Activated T-helper 2 cell treated with anti-CD3 and anti-CD28 coated beads, Interferon-gamma antibody, Interleukin-2, Interleukin-4, amounts not matched to agents 10 μg/mL and 5 μg/mL and 100 μg/mL, durations not matched to agents 14 hours and 24 hours and 36 hours (primary cell): ENCODE measurements at regions of chr19 and their contacts with region 1.

Region 1: GRCh38 chr19:17069218-17069617 is 6.0 kb downstream of the HAUS8 start:
- DNase-seq: no peak
- H3K4me3 Mint-ChIP-seq: no peak overlapping the region
- H3K27ac Mint-ChIP-seq: no peak overlapping the region
- H3K4me1 Mint-ChIP-seq: peaks cover 40% of the 10 kb centered on the region
- H3K27me3 Mint-ChIP-seq: no peaks in the 10 kb centered on the region

Region 2: DNA sequence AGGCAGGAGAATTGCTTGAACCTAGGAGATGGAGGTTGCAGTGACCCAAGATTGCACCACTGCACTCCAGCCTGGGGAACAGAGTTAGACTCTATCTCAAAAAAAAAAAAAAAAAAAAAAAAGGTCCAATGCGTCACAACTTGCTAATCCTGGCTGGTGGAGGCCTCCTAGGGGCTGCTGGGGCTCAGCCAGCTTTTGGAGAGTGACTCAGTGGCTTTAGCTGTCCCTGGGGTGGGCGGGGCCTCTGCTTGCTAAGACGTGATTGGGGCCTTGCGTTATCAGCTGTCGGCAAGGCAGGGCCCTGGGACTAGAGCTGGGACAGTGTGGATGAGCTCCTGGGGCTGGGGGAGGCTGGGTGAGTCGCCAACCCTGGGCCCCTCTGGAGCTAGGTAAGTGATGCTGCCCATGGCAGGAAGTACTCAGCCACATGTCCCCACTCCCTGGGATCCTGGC is 148.4 kb before region 1 on chr19:
- intact Hi-C with region 1: no loop called
- DNase-seq: no peak
- H3K4me3 Mint-ChIP-seq: no peak overlapping the region
- H3K27ac Mint-ChIP-seq: no peak overlapping the region
- H3K4me1 Mint-ChIP-seq: no peaks in the 10 kb centered on the region
- H3K27me3 Mint-ChIP-seq: no peaks in the 10 kb centered on the region

Region 3: DNA sequence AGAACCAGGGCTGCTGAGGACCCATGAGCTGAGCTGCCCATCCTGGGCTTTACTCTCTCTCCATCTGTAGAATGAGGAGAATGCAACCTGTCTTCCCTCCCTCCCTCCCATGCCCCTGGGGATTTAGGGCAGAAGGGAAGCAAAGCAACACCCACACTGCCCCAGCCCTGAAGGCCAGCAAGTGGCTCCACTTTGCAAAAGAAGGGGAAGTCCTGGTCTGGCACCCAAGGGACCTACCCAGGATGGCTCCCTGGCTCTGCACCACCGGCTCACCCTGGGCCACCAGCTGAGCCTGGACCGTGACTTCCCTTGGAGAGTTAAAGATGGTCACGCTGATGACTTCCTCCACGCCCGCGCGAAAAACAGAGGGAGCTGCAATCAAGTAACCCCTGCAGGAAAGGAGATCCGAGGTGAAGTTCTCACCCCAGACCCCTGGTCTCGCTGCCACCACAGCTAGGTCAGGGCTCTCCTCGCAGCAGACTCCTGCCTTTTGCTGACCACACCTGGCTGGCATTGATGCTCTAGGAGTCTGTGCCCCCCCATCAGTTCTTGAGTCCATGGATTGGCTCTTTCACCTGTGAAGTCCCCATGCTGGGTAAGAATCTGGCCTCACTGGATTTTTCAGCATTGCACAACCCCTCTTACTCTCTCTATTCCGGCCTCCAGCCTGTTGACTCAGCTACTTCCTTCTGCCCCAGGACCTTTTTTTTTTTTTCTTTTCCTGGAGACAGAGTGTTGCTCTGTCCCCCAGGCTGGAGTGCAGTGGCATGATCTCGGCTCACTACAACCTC is 47.2 kb before region 1 on chr19:
- intact Hi-C with region 1: no loop called
- DNase-seq: no peak
- H3K4me3 Mint-ChIP-seq: no peak overlapping the region
- H3K27ac Mint-ChIP-seq: no peak overlapping the region
- H3K4me1 Mint-ChIP-seq: peaks cover 3% of the 10 kb centered on the region
- H3K27me3 Mint-ChIP-seq: peaks cover 32% of the 10 kb centered on the region

Region 4: DNA sequence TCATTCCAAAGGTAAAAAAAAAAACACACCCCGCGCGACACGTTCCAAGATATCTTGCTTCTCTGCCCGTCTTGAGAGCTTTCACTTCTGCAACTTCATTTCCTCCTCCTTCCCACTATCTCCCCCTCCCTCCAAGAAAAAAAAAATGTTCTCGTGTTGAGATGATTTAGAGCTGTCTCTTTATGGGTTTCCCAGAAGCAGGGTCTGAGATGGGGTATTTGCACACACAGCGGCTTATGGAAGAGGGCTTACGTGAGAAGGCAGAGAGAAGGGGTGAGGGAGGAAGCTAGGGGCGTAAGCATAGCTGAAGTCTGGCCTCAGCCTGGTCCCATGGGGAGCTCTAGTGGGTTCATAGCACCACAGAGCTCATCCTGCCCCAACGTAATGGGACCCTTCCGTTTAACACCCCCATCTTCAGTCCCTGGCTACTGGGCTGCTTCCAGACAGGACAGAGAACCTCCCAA is 114.7 kb after region 1 on chr19:
- intact Hi-C with region 1: loop called (anchors 5 kb)
- DNase-seq: no peak
- H3K4me3 Mint-ChIP-seq: peak overlapping the region; percentile 77
- H3K27ac Mint-ChIP-seq: peak overlapping the region; percentile 91
- H3K4me1 Mint-ChIP-seq: peaks cover 16% of the 10 kb centered on the region
- H3K27me3 Mint-ChIP-seq: no peaks in the 10 kb centered on the region

Region 5: DNA sequence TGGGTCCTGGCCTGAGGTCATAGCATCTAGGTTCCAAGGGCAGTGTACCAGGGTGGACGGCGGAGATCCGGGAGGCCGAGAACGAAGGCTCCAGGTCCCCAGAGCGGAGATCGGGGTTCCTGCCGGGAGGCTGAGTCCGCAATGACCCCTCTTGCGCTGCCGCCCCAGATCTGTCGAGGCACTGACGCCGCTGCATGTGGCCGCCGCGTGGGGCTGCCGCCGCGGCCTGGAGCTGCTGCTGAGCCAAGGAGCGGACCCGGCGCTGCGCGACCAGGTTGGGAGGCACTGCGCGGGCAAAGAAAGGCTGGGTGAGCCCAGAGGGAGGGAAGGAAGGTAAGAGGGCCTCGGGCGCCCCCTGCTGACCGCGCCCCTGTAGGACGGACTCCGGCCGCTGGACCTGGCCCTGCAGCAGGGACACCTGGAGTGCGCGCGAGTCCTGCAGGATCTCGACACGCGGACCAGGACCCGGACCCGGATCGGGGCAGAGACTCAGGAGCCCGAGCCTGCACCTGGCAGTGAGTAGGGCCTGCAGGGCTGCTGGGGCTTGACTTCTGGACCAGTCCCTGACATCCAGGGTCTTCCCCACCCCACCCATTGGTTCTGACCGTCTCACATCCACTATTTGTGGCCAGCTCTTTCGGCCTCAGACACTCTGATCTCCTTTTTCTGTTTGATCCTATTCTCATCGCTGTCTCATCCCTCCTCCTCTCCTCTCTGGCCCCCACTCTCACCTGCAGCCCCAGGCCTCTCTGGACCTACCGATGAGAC is 213.5 kb after region 1 on chr19:
- intact Hi-C with region 1: loop called (anchors 1 kb)
- DNase-seq: peak; percentile 78
- H3K4me3 Mint-ChIP-seq: peak overlapping the region; percentile 89
- H3K27ac Mint-ChIP-seq: peak overlapping the region; percentile 85
- H3K4me1 Mint-ChIP-seq: peaks cover 5% of the 10 kb centered on the region
- H3K27me3 Mint-ChIP-seq: no peaks in the 10 kb centered on the region